RWPE1 (cell line): ENCODE measurements at regions of chr3 and their contacts with region 1.

Region 1: GRCh38 chr3:124351430-124352148 is 359.7 kb upstream of the ROPN1 start:
- DNase-seq: peak; percentile 66
- H3K27ac ChIP-seq: no peak overlapping the region
- CTCF ChIP-seq: peak; percentile 32

Region 2: DNA sequence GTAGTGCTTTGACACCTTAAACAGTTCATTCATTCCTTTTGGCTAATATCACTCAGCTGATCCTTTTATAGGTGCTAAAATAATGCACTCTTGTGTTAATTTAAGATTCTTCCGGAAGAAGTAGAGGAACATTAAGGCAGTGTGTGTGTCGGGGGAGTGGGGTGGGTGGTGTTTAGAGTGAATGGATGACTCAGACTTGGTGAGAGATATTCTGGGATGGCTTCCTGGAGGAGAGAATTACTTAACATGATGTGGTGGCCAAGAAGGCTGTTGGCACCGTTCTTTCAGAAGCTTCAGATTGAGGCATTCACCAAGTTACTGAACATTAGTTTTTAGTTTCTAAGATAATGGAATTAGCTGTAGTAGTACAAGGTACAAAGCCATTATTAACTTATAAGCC is 234.1 kb before region 1 on chr3:
- CTCF ChIA-PET with region 1: no interaction called
- POLR2A ChIA-PET with region 1: no interaction called
- DNase-seq: no peak
- H3K27ac ChIP-seq: no peak overlapping the region
- CTCF ChIP-seq: no peak

Region 3: GRCh38 chr3:124467980-124468902 is 116.7 kb after region 1 on chr3:
- CTCF ChIA-PET with region 1: interaction called, 16 read pairs
- POLR2A ChIA-PET with region 1: no interaction called
- DNase-seq: peak; percentile 82
- H3K27ac ChIP-seq: no peak overlapping the region
- CTCF ChIP-seq: peak; percentile 93